Ascending aorta (tissue), 2 donors: ENCODE measurements at regions of chr19 and their contacts with region 1.

Region 1: GRCh38 chr19:48510421-48511280 is 984 bp downstream of the LMTK3 start:
- DNase-seq: peak in 1 of 2 donors; percentile 81
- H3K4me3 ChIP-seq: peak overlapping the region; percentile 45 to 59
- H3K27ac ChIP-seq: no peak overlapping the region
- H3K4me1 ChIP-seq: peaks cover 0 to 15% of the 10 kb centered on the region in 2 donors
- H3K27me3 ChIP-seq: peaks cover 4% of the 10 kb centered on the region
- CTCF ChIP-seq: no peak

Region 2: DNA sequence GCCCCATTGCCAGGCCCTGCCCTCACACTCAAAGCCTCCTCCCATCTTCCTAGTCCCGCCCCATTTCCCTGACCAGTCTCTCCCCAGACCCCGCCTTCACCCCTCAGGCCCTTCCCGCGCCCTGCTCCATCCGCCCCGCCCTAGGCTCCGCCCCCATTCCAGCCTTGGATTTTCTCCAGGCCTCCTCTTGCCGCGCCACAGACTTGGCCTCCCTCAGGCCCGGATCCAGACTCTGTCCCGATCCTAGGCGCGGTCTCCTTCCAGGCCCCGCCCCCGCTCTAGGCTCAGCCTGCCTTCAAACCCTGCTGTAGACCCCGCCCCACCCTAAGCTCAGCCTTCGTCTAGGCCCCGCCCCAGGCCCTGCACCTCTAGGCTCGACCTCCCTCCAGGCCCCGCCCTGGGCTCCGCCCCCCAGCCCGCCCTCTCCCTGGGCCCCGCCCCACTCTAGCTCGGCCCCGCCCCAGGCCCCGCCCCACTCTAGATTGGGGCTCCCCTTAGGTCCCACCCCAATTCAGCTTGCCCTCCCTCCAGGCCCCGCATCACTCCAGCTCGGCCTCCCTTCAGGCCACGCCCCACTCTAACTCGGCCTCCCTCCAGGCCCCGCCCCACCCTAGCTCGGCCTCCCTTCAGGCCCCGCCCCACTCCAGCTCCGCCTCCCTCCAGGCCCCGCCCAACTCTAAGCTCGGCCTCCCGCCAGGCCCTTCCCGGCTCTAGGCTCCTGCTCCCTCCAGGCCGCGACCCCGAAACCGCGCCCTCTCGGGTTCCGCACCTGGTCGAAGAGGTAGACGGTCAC is 17.5 kb before region 1 on chr19:
- intact Hi-C with region 1: loop called (anchors 1 kb)
- DNase-seq: peak; percentile 89 to 95
- H3K4me3 ChIP-seq: peak overlapping the region; percentile 58 to 72
- H3K27ac ChIP-seq: peak overlapping the region; percentile 37 to 61
- H3K4me1 ChIP-seq: peaks cover 0 to 10% of the 10 kb centered on the region in 2 donors
- H3K27me3 ChIP-seq: peaks cover under 1% of the 10 kb centered on the region
- CTCF ChIP-seq: no peak

Region 3: DNA sequence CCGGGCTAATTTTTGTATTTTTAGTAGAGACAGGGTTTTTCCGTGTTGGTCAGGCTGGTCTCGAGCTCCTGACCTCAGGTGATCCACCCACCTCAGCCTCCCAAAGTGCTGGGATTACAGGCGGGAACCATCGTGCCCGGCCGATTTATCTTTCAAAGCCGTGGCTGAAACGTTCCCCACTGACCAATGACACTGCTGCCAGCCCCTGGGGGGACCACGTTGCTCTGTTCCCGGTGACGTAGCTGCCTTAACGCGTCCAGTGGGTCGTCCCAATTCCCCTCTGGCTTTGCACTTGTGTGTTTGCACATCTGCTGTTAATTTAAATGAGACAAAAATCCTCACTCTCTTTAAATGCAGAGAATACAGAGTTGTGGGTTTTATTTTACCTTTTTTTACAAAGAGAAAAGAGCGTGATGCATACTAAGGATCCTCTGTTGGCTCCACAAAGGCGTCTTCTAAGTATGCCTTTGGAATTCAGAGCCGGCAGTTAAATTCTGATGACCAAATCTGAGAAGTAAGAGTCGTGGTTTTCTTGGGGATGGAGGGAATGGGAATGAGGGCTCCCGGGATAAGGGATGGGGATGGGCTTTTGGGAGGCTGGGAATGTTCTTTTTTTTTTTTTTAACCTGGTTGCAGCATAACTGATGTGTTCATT is 19.5 kb after region 1 on chr19:
- intact Hi-C with region 1: no loop called
- DNase-seq: no peak
- H3K4me3 ChIP-seq: no peak overlapping the region
- H3K27ac ChIP-seq: no peak overlapping the region
- H3K4me1 ChIP-seq: no peaks in the 10 kb centered on the region
- H3K27me3 ChIP-seq: no peaks in the 10 kb centered on the region
- CTCF ChIP-seq: no peak

Region 4: GRCh38 chr19:48582168-48582567 is 71.5 kb after region 1 on chr19:
- intact Hi-C with region 1: loop called (anchors 5 kb)
- DNase-seq: no peak
- H3K4me3 ChIP-seq: no peak overlapping the region
- H3K27ac ChIP-seq: no peak overlapping the region
- H3K4me1 ChIP-seq: peaks cover 0 to 3% of the 10 kb centered on the region in 2 donors
- H3K27me3 ChIP-seq: no peaks in the 10 kb centered on the region
- CTCF ChIP-seq: no peak

Region 5: GRCh38 chr19:48618916-48619691 is 108.5 kb after region 1 on chr19 and contains the starts of genes RPL18 and SPHK2:
- intact Hi-C with region 1: loop called (anchors 1 kb)
- DNase-seq: peak; percentile 94 to 99
- H3K4me3 ChIP-seq: peak within 1 kb of the TSS; percentile 68 to 95
- H3K27ac ChIP-seq: peak within 1 kb of the TSS; percentile 86 to 87
- H3K4me1 ChIP-seq: peaks cover 16 to 27% of the 10 kb centered on the region in 2 donors
- H3K27me3 ChIP-seq: no peaks in the 10 kb centered on the region
- CTCF ChIP-seq: no peak
- total RNA-seq, gene RPL18: 2,223 TPM
- total RNA-seq, gene SPHK2: 35.3 TPM